ENCODE measurements at regions of chr18 and their contacts with region 1.

Region 1: GRCh38 chr18:8694891-8695290 is 10.5 kb upstream of the MTCL1 start:
- DNase-seq: no peak
- H3K4me3 ChIP-seq: no peak overlapping the region
- H3K27ac ChIP-seq: no peak overlapping the region
- H3K4me1 ChIP-seq: peaks cover 0 to 3% (median 0%) of the 10 kb centered on the region in 4 donors
- H3K27me3 ChIP-seq: no peaks in the 10 kb centered on the region
- CTCF ChIP-seq: no peak
- EP300 ChIP-seq: no peak
- POLR2A ChIP-seq: no peak

Region 2: DNA sequence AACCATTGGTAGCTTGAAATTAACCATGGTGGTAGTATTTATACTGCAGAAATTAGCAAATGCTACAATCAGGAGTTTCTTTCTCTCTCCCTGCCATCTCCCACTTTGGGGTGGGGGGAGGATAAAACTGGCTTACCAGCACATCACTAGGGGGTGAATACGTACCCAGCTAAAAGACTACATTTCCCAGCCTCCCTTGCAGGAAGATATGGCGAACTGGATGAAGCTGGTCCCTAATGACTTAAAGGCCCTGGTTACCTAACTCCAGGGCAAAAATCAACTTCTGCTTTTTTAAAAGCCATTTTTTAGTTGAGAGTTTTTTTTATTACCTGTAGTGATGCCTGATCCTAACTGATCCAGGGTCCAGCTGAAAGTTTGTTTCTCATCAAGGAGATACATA is 156.0 kb before region 1 on chr18:
- intact Hi-C with region 1: no loop called
- DNase-seq: no peak
- H3K4me3 ChIP-seq: no peak overlapping the region
- H3K27ac ChIP-seq: no peak overlapping the region
- H3K4me1 ChIP-seq: no peaks in the 10 kb centered on the region
- H3K27me3 ChIP-seq: no peaks in the 10 kb centered on the region
- CTCF ChIP-seq: no peak
- EP300 ChIP-seq: no peak
- POLR2A ChIP-seq: no peak

Region 3: GRCh38 chr18:8844721-8845148 is 149.8 kb after region 1 on chr18:
- intact Hi-C with region 1: no loop called
- DNase-seq: peak in 1 of 2 donors; percentile 41
- H3K4me3 ChIP-seq: no peak overlapping the region
- H3K27ac ChIP-seq: no peak overlapping the region
- H3K4me1 ChIP-seq: peaks cover 0 to 11% (median 1%) of the 10 kb centered on the region in 4 donors
- H3K27me3 ChIP-seq: no peaks in the 10 kb centered on the region
- CTCF ChIP-seq: no peak
- EP300 ChIP-seq: no peak
- POLR2A ChIP-seq: no peak

Region 4: GRCh38 chr18:8982416-8983184 is 287.7 kb after region 1 on chr18:
- intact Hi-C with region 1: loop called (anchors 5 kb)
- DNase-seq: peak; percentile 67 to 81
- H3K4me3 ChIP-seq: no peak overlapping the region
- H3K27ac ChIP-seq: peak overlapping the region in 1 of 5 donors; percentile 29
- H3K4me1 ChIP-seq: peaks cover 0 to 27% (median 0%) of the 10 kb centered on the region in 4 donors
- H3K27me3 ChIP-seq: no peaks in the 10 kb centered on the region
- CTCF ChIP-seq: peak in 4 of 7 experiments; percentile 17 to 67 (median 47)
- EP300 ChIP-seq: no peak
- POLR2A ChIP-seq: no peak